OCI-LY7 (cell line): ENCODE measurements at regions of chr17 and their contacts with region 1.

Region 1: GRCh38 chr17:79991140-79991923 is 44.3 kb downstream of the TBC1D16 start:
- DNase-seq: peak; percentile 73
- H3K4me3 ChIP-seq: peak overlapping the region; percentile 12
- H3K27ac ChIP-seq: no peak overlapping the region
- H3K4me1 ChIP-seq: peaks cover 16% of the 10 kb centered on the region
- CTCF ChIP-seq: no peak

Region 2: DNA sequence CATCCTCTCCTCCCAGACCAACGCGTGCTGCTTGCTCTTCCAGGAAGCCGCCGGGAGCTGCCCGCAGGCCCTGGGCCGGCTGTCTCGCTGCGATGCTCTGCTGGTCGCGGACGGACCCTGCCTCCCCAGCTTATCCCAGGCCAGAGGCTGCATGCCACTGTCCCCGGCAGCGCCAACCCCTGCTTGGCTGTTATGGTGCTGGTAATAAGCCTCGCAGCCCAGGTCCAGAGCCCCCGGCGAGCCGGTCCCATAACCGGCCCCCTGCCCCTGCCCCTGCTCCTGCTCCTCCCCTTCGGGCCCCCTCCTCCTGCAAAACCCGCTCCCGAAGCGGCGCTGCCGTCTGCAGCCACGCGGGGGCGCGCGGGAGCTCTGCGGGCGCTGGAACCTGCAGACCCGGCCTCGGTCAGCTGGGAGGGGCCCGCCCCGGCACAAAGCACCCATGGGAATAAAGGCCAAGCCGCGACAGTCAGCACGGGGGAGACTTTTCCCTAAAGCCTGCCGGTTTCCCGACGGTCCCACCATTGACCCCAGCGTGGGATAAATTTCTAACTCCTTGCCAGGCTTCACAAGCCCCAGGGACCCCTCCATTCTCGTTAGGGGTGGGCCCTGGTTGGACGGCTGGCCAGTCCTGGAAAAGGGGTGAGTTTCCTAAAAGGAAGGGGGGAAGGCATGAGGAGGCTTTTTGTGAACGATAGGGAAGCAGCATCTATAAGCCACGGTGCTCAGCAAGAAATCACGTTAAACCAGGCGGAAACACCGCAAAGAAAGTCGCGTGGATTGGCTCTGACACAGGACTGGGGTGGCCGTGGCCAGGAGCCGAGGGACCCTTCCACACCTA is 249.4 kb before region 1 on chr17:
- CTCF ChIA-PET with region 1: no interaction called
- POLR2A ChIA-PET with region 1: no interaction called
- intact Hi-C with region 1: no loop called
- DNase-seq: peak; percentile 71
- H3K4me3 ChIP-seq: no peak overlapping the region
- H3K27ac ChIP-seq: no peak overlapping the region
- H3K4me1 ChIP-seq: peaks cover 7% of the 10 kb centered on the region
- CTCF ChIP-seq: peak; percentile 98

Region 3: DNA sequence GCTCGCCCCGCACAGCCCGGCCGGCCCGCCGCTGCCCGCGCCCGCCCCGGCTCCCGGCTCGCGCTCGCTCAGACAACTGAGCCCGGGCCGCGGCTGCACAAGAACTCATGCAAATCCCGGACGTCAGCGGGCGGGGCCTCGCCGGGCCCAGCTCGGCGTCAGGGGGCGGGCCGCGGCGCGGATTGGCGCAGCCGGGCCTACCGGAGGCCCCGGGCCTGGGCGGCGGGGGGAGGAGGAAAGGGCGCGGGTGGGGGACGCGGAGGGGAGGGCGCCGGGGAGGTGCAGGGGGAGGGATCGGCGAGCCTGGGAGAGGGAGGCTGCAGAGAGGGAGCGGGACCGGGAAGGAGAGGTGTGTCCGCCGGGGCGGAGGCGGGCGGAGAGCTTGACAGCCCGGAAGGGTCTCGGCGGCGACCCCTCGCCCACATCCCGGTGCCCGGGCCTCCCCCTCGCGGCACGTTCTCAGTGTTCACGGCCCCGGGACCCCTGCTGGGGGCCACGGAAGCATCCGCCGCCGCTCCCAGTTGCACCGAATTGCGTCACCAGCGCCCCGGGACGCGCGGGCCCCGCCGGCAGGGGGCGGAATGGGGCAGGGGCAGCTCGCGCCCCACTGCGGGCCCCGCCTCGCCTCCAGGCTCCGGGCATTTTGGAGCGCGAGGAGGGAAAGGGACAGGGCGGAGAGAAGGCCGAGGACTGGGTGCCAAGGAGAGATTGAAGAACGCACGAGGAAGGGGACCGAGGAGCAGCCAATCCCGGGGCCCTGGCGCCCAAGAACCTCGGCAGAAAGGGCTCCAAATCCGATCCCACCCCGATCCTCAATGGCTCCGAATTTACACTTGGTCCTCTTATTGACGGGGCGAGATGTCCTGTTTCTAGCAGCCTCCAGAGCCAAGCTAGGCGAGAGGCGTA is 151.7 kb before region 1 on chr17 and contains the start of gene CBX4:
- CTCF ChIA-PET with region 1: no interaction called
- POLR2A ChIA-PET with region 1: interaction called, 3 read pairs
- intact Hi-C with region 1: loop called (anchors 5 kb)
- DNase-seq: peak; percentile 98
- H3K4me3 ChIP-seq: peak within 1 kb of the TSS; percentile 84
- H3K27ac ChIP-seq: peak within 1 kb of the TSS; percentile 91
- H3K4me1 ChIP-seq: peaks cover 24% of the 10 kb centered on the region
- CTCF ChIP-seq: peak; percentile 78
- total RNA-seq, gene CBX4: 98.9 and 109 TPM in 2 replicates

Region 4: DNA sequence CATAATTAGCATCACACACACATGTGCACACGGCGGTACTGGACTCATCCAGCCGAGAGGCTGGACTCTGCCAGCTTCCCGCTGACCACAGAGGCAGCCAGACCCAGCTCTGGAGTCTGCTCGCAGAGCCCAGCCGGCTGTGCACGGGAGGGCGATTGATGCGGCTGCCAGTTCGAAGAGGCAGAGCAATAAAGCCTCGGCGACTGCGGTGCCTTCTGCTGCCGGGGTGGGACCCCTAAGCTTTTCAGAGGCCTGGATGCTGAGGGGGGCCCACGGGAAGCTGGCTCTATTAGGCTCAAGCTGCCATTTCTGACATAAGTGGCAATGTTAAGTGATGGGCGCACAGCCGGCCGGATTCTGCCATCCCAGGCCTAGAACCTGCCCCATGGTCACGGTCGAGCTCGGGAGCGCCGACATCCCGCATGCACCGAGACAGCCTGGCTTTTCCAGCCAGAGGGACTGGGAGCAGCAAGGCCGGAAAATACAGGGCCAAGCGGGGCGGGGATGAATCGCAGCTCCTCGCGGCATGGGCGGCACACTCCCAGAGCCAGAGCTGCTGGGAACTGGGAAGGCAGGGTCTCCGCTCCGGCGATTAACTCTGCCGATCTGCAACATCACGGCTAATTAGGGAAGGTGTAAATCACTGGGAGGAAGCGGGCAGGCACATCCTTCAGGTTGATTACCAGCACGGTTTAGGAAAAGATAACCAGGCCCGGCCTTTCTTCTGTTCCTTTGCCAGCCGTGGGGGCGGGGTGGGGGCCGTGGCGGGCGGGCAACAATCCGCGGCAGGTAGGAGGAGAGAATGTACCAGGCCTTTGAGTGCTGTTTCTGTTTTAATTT is 13.4 kb before region 1 on chr17:
- CTCF ChIA-PET with region 1: no interaction called
- POLR2A ChIA-PET with region 1: no interaction called
- intact Hi-C with region 1: no loop called
- DNase-seq: no peak
- H3K4me3 ChIP-seq: no peak overlapping the region
- H3K27ac ChIP-seq: no peak overlapping the region
- H3K4me1 ChIP-seq: no peaks in the 10 kb centered on the region
- CTCF ChIP-seq: no peak

Region 5: GRCh38 chr17:80254396-80255251 is 263.3 kb after region 1 on chr17:
- CTCF ChIA-PET with region 1: no interaction called
- POLR2A ChIA-PET with region 1: no interaction called
- intact Hi-C with region 1: no loop called
- DNase-seq: peak; percentile 40
- H3K4me3 ChIP-seq: no peak overlapping the region
- H3K27ac ChIP-seq: no peak overlapping the region
- H3K4me1 ChIP-seq: peaks cover 32% of the 10 kb centered on the region
- CTCF ChIP-seq: no peak

Region 6: DNA sequence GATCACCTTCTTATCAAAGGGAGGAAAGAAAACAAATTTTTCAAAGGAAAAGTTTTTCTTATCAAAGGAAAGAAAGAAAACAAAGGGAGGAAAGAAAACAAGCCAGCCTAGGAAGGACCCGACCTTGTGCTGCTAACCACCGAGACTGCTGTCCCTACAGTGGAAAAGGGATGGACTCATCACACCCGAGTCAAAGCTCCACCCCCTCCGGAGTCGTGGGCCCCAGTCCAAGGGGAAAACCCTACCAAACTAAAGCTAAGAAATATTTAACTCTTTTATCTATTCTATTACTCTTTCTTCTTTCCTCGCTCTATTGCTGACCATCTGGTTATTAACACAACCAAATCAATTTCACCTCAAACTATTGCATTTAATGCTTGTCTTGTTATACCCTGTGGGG is 417.5 kb after region 1 on chr17:
- CTCF ChIA-PET with region 1: no interaction called
- POLR2A ChIA-PET with region 1: no interaction called
- intact Hi-C with region 1: no loop called
- DNase-seq: no peak
- H3K4me3 ChIP-seq: no peak overlapping the region
- H3K27ac ChIP-seq: no peak overlapping the region
- H3K4me1 ChIP-seq: no peaks in the 10 kb centered on the region
- CTCF ChIP-seq: no peak

Region 7: GRCh38 chr17:81222906-81223761 is 1231.8 kb after region 1 on chr17 and contains the start of gene CEP131:
- CTCF ChIA-PET with region 1: interaction called, 13 read pairs
- POLR2A ChIA-PET with region 1: no interaction called
- intact Hi-C with region 1: no loop called
- DNase-seq: peak; percentile 100
- H3K4me3 ChIP-seq: peak within 1 kb of the TSS; percentile 79
- H3K27ac ChIP-seq: no peak within 1 kb of the TSS
- H3K4me1 ChIP-seq: peaks cover 30% of the 10 kb centered on the region
- CTCF ChIP-seq: no peak
- total RNA-seq, gene CEP131: 32.9 and 35.0 TPM in 2 replicates

Region 8: GRCh38 chr17:81294856-81295680 is 1303.7 kb after region 1 on chr17 and contains the start of gene SLC38A10:
- CTCF ChIA-PET with region 1: interaction called, 15 read pairs
- POLR2A ChIA-PET with region 1: no interaction called
- intact Hi-C with region 1: no loop called
- DNase-seq: peak; percentile 95
- H3K4me3 ChIP-seq: peak within 1 kb of the TSS; percentile 78
- H3K27ac ChIP-seq: peak within 1 kb of the TSS; percentile 49
- H3K4me1 ChIP-seq: peaks cover 28% of the 10 kb centered on the region
- CTCF ChIP-seq: peak; percentile 37; the same call in 1 of the 2 replicates
- total RNA-seq, gene SLC38A10: 50.5 and 56.0 TPM in 2 replicates